T-cell (primary cell): ENCODE measurements at regions of chr2 and their contacts with region 1.

Region 1: DNA sequence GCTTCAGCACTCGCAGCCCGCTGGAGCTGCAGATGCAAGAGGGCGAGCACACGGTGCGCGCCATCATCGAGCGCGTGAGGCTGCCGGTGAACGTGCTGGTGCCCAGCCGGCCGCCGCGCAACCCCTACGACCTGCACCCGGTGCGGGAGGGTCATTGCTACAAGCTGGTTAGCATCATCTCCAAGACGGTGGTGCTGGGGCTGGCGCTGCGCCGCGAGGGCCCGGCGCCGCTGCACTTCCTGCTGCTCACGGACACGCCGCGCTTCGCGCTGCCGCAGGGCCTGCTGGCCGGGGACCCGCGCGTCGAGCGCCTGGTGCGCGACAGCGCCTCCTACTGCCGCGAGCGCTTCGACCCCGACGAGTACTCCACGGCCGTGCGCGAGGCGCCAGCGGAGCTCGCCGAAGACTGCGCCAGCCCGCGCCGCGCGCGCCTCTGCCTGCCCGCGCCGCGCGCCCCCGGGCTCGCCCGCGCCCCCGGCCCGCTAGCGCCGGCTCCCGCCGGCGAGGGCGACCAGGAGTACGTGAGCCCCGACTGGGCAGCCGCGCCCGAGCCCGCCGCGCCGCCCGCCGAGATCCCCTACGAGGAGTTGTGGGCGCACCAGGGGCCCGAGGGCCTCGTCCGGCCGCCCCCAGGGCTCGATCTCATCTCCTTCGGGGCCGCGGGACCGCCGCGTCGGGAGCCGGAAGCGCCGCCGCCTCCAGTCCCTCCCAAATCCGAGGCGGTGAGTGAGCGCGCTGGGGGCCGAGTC is 11.8 kb downstream of the GAREM2 start:
- DNase-seq: peak; percentile 73 to 95 (median 85)
- ATAC-seq: peak; percentile 96 to 99 (median 98)
- H3K4me3 ChIP-seq: peak overlapping the region; percentile 62 to 66
- H3K4me3 Mint-ChIP-seq: peak overlapping the region; percentile 75 to 80 (median 79)
- H3K27ac ChIP-seq: no peak overlapping the region
- H3K27ac Mint-ChIP-seq: no peak overlapping the region
- H3K4me1 ChIP-seq: peaks cover 4 to 22% of the 10 kb centered on the region in 2 experiments
- H3K4me1 Mint-ChIP-seq: peaks cover 19 to 28% (median 19%) of the 10 kb centered on the region in 3 donors
- H3K27me3 ChIP-seq: peaks cover 0 to 26% of the 10 kb centered on the region in 2 experiments
- H3K27me3 Mint-ChIP-seq: peaks cover 10 to 14% of the 10 kb centered on the region in 2 donors

Region 2: DNA sequence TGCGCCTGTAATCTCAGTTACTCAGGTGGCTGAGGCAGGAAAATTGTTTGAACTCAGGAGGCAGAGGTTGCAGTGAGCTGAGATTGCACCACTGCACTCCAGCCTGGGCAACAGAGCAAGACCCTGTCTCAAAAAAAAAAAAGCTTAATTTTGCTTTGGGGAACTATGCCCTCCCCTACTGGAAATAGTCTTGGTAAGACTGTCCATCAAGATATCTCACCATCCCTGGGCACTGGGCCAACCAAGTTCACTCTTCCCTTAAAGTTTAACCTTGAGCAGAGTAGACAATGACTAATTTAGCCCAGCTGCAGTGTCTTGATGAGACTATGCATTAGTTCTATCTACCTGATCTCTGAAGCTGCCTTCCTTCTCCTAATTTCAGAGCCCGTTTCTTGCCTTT is 351.2 kb before region 1 on chr2:
- CTCF ChIA-PET with region 1: no interaction called
- POLR2A ChIA-PET with region 1: interaction called in 1 of 2 experiments, 13 read pairs
- DNase-seq: no peak
- ATAC-seq: no peak
- H3K4me3 ChIP-seq: no peak overlapping the region
- H3K4me3 Mint-ChIP-seq: no peak overlapping the region
- H3K27ac ChIP-seq: no peak overlapping the region
- H3K27ac Mint-ChIP-seq: peak overlapping the region in 1 of 2 donors; percentile 27
- H3K4me1 ChIP-seq: peaks cover 9 to 14% of the 10 kb centered on the region in 2 experiments
- H3K4me1 Mint-ChIP-seq: peaks cover 39 to 66% (median 57%) of the 10 kb centered on the region in 3 donors
- H3K27me3 ChIP-seq: no peaks in the 10 kb centered on the region
- H3K27me3 Mint-ChIP-seq: no peaks in the 10 kb centered on the region

Region 3: DNA sequence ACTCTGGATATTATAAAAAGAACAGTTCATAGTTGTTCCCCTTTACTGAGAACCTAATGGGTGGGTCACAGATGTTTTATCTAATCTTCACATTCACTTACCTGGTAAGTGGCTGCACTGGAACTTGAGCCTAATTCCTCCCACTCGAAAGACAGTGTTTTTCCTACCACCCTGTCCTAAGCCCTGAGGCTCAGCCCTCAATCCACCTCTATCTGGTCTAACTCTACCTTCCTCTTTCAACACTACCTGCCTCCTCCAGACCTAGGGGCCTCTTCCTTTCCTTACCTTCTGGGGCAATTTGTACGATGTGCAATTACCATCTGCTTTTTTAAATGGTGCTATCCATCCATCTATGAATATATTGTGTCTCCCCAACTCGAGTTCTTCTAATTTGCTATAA is 192.8 kb before region 1 on chr2:
- CTCF ChIA-PET with region 1: interaction called in 1 of 2 experiments, 13 read pairs
- POLR2A ChIA-PET with region 1: no interaction called
- DNase-seq: no peak
- ATAC-seq: no peak
- H3K4me3 ChIP-seq: no peak overlapping the region
- H3K4me3 Mint-ChIP-seq: peak overlapping the region in 1 of 3 donors; percentile 72
- H3K27ac ChIP-seq: no peak overlapping the region
- H3K27ac Mint-ChIP-seq: peak overlapping the region; percentile 40 to 51
- H3K4me1 ChIP-seq: peaks cover 0 to 5% of the 10 kb centered on the region in 2 experiments
- H3K4me1 Mint-ChIP-seq: peaks cover 7 to 18% (median 17%) of the 10 kb centered on the region in 3 donors
- H3K27me3 ChIP-seq: peaks cover 0 to 3% of the 10 kb centered on the region in 2 experiments
- H3K27me3 Mint-ChIP-seq: no peaks in the 10 kb centered on the region